Dendritic cell treated with granulocyte-macrophage colony-stimulating factor and Interleukin-4, amounts not matched to agents 40 ng/mL and 50 ng/mL, for 4 days (primary cell): ENCODE measurements at regions of chr12 and their contacts with region 1.

Region 1: DNA sequence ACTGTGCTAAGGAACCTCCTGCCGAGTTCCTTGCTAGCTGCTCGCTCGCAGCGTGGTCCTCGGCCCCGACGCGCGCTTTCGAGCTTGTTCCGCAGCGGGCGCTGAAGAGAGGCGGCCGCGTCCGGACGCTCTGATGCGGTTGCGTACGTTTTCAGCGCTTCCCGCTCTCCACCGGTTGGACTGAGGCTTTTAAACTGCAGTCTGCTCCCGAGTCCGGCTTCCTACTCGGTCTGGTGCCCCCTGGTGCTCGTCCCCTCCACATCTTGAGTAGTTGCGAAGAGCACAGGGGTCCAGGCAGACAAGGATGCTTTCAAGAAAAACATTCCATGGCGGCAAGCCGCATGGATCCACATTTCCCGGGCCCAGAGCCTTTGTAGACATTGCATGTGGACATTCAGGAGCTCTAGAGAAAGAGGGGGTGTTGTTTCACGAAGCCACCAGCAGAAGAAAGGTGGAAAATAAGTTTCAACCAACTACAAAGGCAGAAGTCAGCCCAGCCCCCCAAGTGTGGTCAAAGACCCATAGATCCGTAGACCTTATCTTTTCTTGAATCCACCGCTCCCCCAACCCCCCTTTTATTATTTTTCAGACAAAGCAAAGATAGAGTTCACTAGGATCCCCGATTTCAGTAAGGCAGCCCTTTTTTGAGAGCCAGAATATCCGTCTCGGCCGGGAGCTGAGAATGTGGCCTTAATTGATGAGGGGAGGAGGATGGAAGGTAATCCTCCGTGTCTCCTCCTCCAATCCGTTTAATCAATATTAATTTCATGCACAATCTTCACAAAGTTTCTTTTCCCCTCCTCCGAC is 984 bp upstream of the WNK1 start:
- H3K4me3 Mint-ChIP-seq: no peak overlapping the region
- H3K27ac Mint-ChIP-seq: no peak overlapping the region
- H3K4me1 Mint-ChIP-seq: peaks cover 17% of the 10 kb centered on the region
- H3K27me3 Mint-ChIP-seq: no peaks in the 10 kb centered on the region

Region 2: GRCh38 chr12:569803-570434 is 181.5 kb before region 1 on chr12:
- intact Hi-C with region 1: loop called (anchors 1 kb)
- H3K4me3 Mint-ChIP-seq: peak overlapping the region; percentile 76
- H3K27ac Mint-ChIP-seq: peak overlapping the region; percentile 31
- H3K4me1 Mint-ChIP-seq: peaks cover 32% of the 10 kb centered on the region
- H3K27me3 Mint-ChIP-seq: peaks cover 5% of the 10 kb centered on the region

Region 3: GRCh38 chr12:575948-576612 is 175.3 kb before region 1 on chr12:
- intact Hi-C with region 1: loop called (anchors 2 kb)
- H3K4me3 Mint-ChIP-seq: peak overlapping the region; percentile 66
- H3K27ac Mint-ChIP-seq: peak overlapping the region; percentile 85
- H3K4me1 Mint-ChIP-seq: peaks cover 33% of the 10 kb centered on the region
- H3K27me3 Mint-ChIP-seq: peaks cover 2% of the 10 kb centered on the region

Region 4: GRCh38 chr12:614411-614970 is 136.9 kb before region 1 on chr12:
- intact Hi-C with region 1: loop called (anchors 2 kb)
- H3K4me3 Mint-ChIP-seq: no peak overlapping the region
- H3K27ac Mint-ChIP-seq: peak overlapping the region; percentile 45
- H3K4me1 Mint-ChIP-seq: peaks cover 95% of the 10 kb centered on the region
- H3K27me3 Mint-ChIP-seq: no peaks in the 10 kb centered on the region

Region 5: DNA sequence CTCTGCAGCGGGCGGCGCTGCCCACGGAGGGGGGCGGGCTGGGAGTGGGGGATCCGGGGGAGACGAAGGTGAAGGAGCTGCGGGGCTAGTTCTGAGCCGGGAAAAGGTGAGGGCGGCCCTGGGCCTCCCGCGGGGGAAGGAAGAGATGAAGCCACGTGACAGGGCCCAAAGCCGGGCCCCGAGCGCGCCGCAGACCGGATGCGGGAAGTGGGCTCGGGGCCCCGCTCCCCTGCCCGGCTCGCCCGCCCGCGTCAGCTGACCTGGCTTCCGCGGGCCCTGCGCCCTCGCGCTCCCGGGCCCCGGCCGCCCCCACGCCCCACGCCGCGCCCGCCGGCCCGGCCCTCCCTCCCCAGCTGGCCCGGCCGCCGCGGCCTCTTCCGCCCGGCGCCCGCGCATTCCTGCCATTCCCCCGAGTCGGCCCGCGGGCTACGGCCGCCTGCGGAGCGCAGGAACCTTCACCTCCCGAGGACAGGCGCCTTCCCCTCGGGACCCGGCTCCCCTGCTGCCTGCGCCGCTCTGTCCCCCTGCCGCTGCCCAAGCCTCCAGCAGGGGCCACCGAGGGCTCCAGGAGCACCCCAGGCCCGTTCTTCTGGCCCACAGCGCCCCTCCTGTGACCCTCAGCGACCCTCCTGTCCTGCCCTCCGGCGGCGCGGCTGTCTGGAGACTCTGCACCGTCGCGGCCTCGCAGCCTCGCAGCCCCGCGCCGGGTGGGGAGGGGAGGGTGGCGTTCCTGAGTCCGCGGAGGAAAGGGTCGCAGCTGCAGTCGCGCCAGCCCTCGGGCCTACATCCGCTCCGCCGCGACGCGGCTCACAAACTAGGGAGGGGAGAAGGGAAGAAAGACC is 108.5 kb before region 1 on chr12:
- intact Hi-C with region 1: loop called (anchors 5 kb)
- H3K4me3 Mint-ChIP-seq: peak overlapping the region; percentile 73
- H3K27ac Mint-ChIP-seq: peak overlapping the region; percentile 90
- H3K4me1 Mint-ChIP-seq: peaks cover 80% of the 10 kb centered on the region
- H3K27me3 Mint-ChIP-seq: no peaks in the 10 kb centered on the region